HEK293 (cell line): ENCODE measurements at regions of chr6 and their contacts with region 1.

Region 1: DNA sequence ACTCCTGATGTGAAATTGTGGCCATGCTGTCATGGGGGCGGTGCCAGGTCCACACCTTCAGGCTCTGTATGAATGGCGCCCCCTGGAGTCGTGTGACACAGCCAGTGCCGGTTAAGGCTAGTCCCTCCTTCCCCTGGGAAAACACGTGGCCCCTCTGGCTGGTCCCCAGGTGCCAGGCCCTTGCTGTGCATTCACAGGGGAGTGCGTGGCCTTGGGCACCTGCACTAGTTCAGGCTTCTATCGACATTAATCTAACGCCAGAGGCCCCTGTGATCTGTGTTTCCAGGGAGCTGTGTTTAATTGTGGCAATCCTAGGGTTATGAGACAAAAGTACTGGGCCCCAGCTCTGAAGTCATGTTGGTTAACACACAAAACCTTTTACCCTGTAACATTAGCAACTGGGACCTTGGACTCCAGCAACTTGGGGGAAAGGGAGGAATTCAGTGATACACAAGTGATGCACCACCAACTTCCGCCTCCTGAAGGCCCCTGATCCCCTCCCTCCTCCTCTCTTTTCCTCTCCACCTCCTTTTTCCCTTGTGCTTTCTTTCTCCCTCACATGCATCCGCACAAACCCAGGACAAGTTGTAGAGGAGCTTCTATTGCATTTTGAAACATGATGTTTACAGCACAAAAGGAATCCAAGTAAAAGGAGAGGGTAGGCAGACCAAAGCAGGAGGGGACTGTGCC is 74.0 kb downstream of the SSR1 start:
- H3K4me3 ChIP-seq: no peak overlapping the region
- H3K27ac ChIP-seq: no peak overlapping the region
- H3K4me1 ChIP-seq: peaks cover 3% of the 10 kb centered on the region; the same call in 1 of the 2 replicates
- CTCF ChIP-seq: no peak

Region 2: DNA sequence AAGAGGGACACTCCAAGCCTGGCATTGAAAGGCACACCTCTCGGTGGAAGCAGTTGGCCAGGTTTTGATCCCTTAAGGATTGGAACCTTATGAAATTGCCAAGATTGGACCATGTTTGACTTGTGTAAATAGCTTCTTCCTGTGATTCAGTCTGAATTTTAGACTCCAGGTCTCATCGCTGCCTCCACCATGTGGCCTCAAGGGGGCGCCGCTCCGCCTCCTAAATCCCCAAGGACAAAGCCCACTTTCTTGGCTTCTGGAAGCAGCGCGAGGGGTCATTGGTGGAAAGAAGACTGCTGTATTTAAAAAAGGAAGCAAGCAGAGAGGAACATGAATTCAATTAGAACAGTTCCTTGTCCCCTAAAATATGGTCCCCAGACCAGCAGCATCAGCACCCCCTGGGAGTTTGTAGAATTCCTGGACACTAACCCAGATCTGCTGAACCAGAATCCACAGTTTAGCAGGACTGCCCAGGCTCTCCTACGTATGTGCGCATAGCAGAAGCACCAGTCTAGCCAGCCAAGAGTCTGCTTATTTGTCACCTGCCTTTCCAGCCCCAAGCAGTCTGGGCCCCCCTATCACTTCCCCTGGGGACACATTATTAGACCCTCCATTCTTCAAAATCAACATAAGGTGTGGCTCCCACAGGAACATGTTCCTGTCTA is 542.0 kb before region 1 on chr6:
- CTCF ChIA-PET with region 1: interaction called, 13 read pairs
- POLR2A ChIA-PET with region 1: no interaction called
- H3K4me3 ChIP-seq: no peak overlapping the region
- H3K27ac ChIP-seq: no peak overlapping the region
- H3K4me1 ChIP-seq: peaks cover 10% of the 10 kb centered on the region
- CTCF ChIP-seq: peak; percentile 49

Region 3: GRCh38 chr6:6758915-6759654 is 480.0 kb before region 1 on chr6:
- CTCF ChIA-PET with region 1: interaction called, 10 read pairs
- POLR2A ChIA-PET with region 1: no interaction called
- H3K4me3 ChIP-seq: no peak overlapping the region
- H3K27ac ChIP-seq: no peak overlapping the region
- H3K4me1 ChIP-seq: peaks cover 4% of the 10 kb centered on the region; the same call in 1 of the 2 replicates
- CTCF ChIP-seq: no peak

Region 4: DNA sequence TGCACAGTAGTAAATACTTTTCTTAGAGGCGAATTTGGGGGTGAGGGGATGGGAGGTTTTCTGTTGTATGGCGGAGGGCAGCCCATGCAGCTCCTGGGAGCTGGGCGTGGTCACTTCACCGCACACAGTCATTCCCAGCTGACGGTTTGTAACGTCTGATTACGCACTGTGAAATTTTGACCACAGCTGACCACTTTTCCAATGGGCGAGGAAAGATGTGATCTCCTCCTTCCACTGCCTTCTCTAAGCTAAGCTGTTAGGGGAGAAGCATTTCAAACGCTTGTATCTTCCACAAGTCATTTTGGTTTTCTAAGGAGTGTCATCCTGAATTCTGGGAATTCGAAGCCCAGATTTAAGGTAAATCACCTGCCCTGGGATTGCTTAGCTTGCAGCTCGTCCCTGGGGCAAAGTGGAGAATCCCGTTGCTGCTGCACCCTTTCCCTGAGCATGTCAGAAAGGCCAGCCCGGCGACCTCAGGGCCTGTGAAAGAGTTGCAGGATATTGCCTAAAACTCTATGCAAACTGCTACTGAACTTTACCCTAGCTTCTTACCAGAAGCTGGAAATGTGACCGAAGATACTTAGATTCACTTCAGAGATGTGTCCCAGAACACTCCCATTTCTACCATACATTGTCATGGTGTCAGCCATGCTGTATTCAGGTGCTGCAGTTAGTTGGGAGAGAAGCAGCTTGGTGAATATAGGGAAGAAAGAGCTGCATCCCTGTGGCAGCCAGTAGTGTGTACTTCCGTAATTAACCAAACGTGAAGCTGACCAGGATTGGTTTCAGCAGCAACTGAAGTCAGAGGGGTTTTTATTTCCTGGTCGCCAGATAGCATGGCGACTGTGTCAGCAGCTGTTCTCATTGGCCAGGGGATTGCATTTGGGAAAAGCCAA is 72.4 kb before region 1 on chr6:
- CTCF ChIA-PET with region 1: interaction called, 13 read pairs
- POLR2A ChIA-PET with region 1: no interaction called
- H3K4me3 ChIP-seq: no peak overlapping the region
- H3K27ac ChIP-seq: no peak overlapping the region
- H3K4me1 ChIP-seq: peaks cover 25% of the 10 kb centered on the region
- CTCF ChIP-seq: no peak

Region 5: GRCh38 chr6:7219310-7219709 is 19.7 kb before region 1 on chr6:
- CTCF ChIA-PET with region 1: interaction called, 16 read pairs
- POLR2A ChIA-PET with region 1: no interaction called
- H3K4me3 ChIP-seq: no peak overlapping the region
- H3K27ac ChIP-seq: no peak overlapping the region
- H3K4me1 ChIP-seq: peaks cover 3% of the 10 kb centered on the region; the same call in 1 of the 2 replicates
- CTCF ChIP-seq: no peak

Region 6: DNA sequence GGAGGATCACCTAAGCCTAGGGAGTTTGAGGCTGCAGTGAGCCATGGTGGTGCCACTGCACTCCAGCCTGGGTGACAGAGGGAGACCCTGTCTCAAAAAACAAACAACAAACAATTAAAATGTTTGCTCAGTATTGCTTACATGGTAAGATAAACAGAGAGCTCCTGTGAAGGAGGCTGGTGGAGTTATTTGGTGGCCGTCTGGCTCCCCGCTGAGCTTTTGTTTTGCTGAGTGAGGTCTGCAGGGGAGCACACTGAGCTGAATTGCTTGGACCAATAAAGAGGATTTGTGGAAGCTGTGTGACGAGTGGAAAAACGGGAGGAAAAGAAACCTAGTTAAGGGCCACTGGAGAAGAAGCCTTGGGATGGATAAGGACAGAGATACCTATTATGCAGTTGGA is 445.8 kb after region 1 on chr6:
- CTCF ChIA-PET with region 1: no interaction called
- POLR2A ChIA-PET with region 1: no interaction called
- H3K4me3 ChIP-seq: no peak overlapping the region
- H3K27ac ChIP-seq: no peak overlapping the region
- H3K4me1 ChIP-seq: no peaks in the 10 kb centered on the region
- CTCF ChIP-seq: no peak